ENCODE measurements at regions of chr2 and their contacts with region 1.

Region 1: GRCh38 chr2:183078465-183079138 is at the start of gene DUSP19:
- DNase-seq: peak; percentile 54 to 94
- ATAC-seq: peak; percentile 91 to 96 (median 94)
- H3K4me3 ChIP-seq: peak within 1 kb of the TSS; percentile 42 to 78 (median 70)
- H3K27ac ChIP-seq: peak within 1 kb of the TSS; percentile 71 to 92 (median 88)
- H3K4me1 ChIP-seq: peaks cover 0 to 33% (median 18%) of the 10 kb centered on the region in 9 donors
- H3K27me3 ChIP-seq: peaks cover 0 to 18% (median 0%) of the 10 kb centered on the region in 7 donors
- CTCF ChIP-seq: no peak
- total RNA-seq, gene DUSP19: 5.6 to 14.1 (median 11.8) TPM

Region 2: DNA sequence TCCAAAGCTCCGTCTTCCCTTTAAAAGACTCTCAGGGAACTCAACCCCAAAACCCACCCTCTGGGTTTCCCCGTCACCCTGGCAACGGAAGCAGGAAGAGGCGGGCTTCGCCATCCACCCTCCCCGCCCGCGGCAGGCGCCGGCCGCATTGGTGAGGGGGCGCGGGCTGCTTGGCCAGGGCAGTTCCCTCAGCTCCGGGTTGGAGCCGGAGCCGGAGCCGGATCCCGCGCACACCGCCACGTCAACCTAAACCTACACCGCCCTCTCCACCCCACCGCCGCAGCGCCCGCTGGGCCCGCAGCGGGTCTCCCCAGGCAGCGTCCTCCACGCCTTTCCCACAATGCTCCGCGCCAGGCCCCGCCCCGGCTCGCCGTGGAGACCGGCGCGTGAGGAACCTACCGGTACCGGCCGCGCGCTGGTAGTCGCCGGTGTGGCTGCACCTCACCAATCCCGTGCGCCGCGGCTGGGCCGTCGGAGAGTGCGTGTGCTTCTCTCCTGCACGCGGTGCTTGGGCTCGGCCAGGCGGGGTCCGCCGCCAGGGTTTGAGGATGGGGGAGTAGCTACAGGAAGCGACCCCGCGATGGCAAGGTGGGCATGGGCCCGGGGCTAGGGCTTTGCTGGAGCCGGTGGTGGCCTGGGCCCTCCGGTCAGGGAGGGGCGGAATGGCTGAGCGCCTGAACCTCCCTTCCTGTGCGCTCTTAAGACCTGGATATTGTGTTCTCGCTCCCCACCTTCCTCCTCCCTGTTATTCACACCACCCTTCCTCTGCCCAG is 362.5 kb before region 1 on chr2 and contains the start of gene DNAJC10:
- intact Hi-C with region 1: loop called in 1 of 10 experiments (anchors 5 kb)
- DNase-seq: peak; percentile 89 to 92
- ATAC-seq: peak; percentile 96 to 99 (median 98)
- H3K4me3 ChIP-seq: peak within 1 kb of the TSS; percentile 78 to 98 (median 92)
- H3K27ac ChIP-seq: peak within 1 kb of the TSS; percentile 70 to 93 (median 86)
- H3K4me1 ChIP-seq: peaks cover 0 to 48% (median 24%) of the 10 kb centered on the region in 9 donors
- H3K27me3 ChIP-seq: no peaks in the 10 kb centered on the region
- CTCF ChIP-seq: no peak
- total RNA-seq, gene DNAJC10: 37.6 to 63.7 (median 57.5) TPM

Region 3: DNA sequence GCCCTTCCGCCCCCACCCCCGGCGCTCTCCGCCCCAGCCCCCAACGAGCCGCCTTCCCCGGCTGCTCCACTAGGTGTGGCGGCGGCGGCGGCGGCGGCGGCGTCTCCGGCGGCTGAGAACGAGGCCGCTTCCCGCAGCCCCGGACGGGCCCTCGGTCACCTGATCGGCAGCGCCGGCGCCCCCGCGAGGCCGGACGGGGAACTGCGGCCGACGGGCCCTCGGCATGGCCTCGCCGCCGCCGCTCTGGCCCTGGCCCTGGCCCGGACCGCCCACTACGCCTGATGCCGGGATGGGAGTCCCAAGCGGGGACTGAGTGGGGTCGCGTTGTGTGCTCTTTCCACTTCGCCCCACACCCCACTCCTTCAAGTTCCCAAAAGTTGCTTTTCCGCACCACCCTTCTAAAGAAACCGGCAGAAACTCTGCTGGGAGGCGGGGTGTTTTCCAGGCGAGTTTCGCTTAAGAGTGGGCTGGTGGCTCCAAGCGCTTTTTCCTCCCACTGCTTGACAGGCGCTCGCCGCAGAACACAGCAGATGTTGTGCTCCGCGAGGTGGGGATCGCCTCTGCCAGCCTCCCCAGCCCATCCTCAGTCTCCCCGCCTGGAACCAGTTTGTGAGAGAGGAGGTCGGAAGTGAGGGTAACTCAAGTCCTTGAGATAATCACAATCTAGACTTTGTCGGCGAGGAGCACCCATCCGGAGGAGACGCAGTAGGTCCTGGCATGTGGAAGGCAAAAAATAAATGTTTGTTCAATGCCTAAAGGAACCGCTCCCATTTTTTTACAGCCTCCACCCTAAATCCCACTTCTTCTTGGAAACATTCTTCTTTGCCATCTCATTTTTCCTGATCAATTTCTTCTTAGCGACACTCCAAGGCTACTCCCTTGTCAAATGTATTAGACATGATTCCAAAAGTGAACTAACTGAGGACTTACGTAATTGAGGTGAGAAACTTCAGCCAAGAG is 40.0 kb before region 1 on chr2 and contains the start of gene NCKAP1:
- intact Hi-C with region 1: loop called in 2 of 10 experiments (anchors 1 to 5 kb)
- DNase-seq: peak; percentile 91 to 95
- ATAC-seq: peak; percentile 92 to 96 (median 94)
- H3K4me3 ChIP-seq: peak within 1 kb of the TSS; percentile 69 to 88 (median 83)
- H3K27ac ChIP-seq: peak within 1 kb of the TSS; percentile 95 to 100 (median 99)
- H3K4me1 ChIP-seq: peaks cover 0 to 49% (median 37%) of the 10 kb centered on the region in 9 donors
- H3K27me3 ChIP-seq: peaks cover 0 to 93% (median 0%) of the 10 kb centered on the region in 7 donors
- CTCF ChIP-seq: peak; percentile 81 to 99 (median 93)
- total RNA-seq, gene NCKAP1: 118 to 153 (median 130) TPM

Region 4: GRCh38 chr2:183124222-183124956 is 45.8 kb after region 1 on chr2 and contains the start of gene NUP35:
- intact Hi-C with region 1: loop called in 2 of 10 experiments (anchors 1 to 5 kb)
- DNase-seq: peak; percentile 79 to 88
- ATAC-seq: peak; percentile 98 to 99 (median 99)
- H3K4me3 ChIP-seq: peak within 1 kb of the TSS; percentile 52 to 96 (median 80)
- H3K27ac ChIP-seq: peak within 1 kb of the TSS; percentile 7 to 88 (median 80)
- H3K4me1 ChIP-seq: peaks cover 0 to 23% (median 14%) of the 10 kb centered on the region in 9 donors
- H3K27me3 ChIP-seq: no peaks in the 10 kb centered on the region
- CTCF ChIP-seq: no peak
- total RNA-seq, gene NUP35: 4.4 to 11.0 (median 8.3) TPM

Measured in heart right ventricle (tissue), 16 donors.